T-cell (primary cell): ENCODE measurements at regions of chr19 and their contacts with region 1.

Region 1: GRCh38 chr19:3325451-3325850 is 40.9 kb upstream of the NFIC start:
- DNase-seq: no peak
- ATAC-seq: no peak
- H3K4me3 ChIP-seq: no peak overlapping the region
- H3K4me3 Mint-ChIP-seq: no peak overlapping the region
- H3K27ac ChIP-seq: no peak overlapping the region
- H3K27ac Mint-ChIP-seq: no peak overlapping the region
- H3K4me1 ChIP-seq: no peaks in the 10 kb centered on the region
- H3K4me1 Mint-ChIP-seq: no peaks in the 10 kb centered on the region
- H3K27me3 ChIP-seq: peaks cover 0 to 26% of the 10 kb centered on the region in 2 experiments
- H3K27me3 Mint-ChIP-seq: peaks cover 6 to 18% of the 10 kb centered on the region in 2 donors

Region 2: DNA sequence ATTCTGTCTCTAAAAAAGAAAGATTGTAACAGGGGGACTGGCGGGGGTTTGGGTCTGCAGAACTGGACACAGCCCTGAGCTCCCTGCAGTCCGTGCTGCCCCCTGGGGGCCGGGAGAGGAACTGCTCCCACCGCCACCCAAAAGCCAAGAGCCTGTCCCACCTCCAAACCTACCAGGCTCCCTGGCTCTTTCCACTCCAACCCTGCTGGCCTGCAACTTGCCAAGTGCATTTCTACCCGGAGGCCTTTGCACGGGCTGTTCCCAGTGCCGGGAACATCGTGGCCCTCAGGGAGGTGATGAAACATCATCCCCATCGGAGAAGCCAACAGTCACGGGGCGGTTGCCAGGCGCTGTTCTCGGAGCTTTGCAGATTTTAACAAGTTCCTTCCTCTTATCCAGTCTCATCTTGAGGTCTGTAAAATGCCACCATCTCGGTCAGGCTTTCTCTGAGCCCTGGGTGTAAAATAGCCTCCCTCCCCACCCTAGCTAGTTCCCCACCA is 104.2 kb after region 1 on chr19:
- CTCF ChIA-PET with region 1: interaction called, 7 to 11 read pairs
- POLR2A ChIA-PET with region 1: no interaction called
- DNase-seq: peak; percentile 32 to 82 (median 67)
- ATAC-seq: peak; percentile 59 to 79 (median 67)
- H3K4me3 ChIP-seq: no peak overlapping the region
- H3K4me3 Mint-ChIP-seq: no peak overlapping the region
- H3K27ac ChIP-seq: no peak overlapping the region
- H3K27ac Mint-ChIP-seq: no peak overlapping the region
- H3K4me1 ChIP-seq: peaks cover 0 to 12% of the 10 kb centered on the region in 2 experiments
- H3K4me1 Mint-ChIP-seq: peaks cover 6 to 14% (median 8%) of the 10 kb centered on the region in 3 donors
- H3K27me3 ChIP-seq: no peaks in the 10 kb centered on the region
- H3K27me3 Mint-ChIP-seq: no peaks in the 10 kb centered on the region